GM10248 (cell line): ENCODE measurements at regions of chr9 and their contacts with region 1.

Region 1: DNA sequence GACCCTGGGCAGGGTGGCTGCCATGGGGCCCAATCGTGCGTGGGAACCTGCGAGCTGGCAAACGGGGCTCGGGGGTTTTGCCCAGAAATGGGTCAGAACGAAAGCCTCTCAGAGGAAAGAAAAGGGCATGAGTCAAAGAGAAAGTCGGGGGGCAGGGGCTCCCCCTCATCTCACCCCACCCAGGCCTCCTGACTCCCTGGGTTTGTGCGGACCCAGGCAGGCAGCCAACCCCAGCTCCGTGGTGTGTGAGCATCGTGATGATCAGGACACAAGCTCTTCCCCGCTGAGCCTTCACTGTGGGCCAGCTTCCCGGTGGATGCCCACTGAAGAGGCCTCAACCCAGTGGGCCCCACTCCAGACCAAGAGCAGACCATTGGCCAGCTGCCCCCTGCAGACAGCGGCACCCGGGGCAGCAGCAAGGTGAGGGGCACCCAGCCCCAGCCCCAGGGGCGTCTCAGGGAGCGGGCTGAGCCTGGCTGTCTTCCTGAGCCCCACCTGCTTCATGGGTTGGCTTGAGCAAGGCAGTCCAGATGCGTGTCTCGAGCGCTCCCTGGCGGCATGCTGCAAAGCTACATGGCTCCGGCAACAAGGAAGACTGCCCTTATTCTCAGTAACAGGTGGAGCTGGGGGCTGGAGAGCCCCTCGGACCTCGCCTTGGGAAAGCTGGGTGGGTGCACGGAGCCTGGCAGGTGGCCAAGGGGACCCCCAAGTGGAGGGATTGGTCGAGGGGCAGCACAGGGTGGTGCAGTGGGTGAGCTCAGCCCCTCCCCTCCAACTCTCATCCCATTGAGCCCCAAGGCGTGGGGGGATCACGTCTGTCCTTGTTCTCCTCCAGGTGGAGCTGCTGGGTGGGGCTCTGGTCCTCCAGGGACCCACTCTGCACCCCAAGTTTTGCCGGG is 3.2 kb upstream of the FUT7 start:
- DNase-seq: peak; percentile 92
- CTCF ChIP-seq: peak; percentile 96

Region 2: GRCh38 chr9:136769710-136770191 is 265.4 kb before region 1 on chr9:
- CTCF ChIA-PET with region 1: interaction called, 13 read pairs
- POLR2A ChIA-PET with region 1: no interaction called
- DNase-seq: peak; percentile 76
- CTCF ChIP-seq: peak; percentile 74

Region 3: DNA sequence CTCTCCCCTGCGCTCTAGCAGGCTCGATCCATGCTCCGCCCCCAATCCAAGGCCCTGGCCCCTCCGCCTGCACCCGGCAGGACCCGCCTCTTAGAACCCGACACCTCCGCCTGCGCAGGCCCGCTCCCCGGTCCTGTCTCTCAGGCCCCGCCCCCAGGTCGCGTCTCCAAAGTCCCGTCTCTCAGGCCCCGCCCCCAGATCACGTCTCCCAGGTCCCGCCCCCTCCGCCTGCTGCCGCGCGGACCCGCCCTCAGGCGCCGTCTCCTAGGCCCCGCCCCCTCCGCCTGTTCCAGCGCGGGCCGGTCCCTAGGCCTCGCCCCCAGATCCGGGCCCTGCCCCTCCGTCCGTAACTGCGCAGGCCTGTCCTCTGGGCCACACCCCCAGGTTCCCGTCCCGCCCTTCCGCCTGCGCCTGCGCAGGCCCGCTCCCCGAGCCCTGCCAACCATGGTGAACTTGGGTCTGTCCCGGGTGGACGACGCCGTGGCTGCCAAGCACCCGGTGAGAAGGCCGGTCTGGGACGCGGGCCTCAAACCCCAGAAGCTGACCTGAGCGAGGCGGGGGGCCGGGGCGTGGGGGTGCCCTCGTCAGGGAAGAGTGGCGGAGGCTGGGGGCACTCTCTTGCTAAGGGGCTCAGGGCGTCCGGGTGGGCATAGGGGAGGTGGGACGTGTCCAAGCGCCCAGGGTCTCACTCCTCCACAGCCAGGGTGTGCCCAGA is 244.0 kb before region 1 on chr9 and contains the start of gene TMEM141:
- CTCF ChIA-PET with region 1: interaction called, 41 read pairs
- POLR2A ChIA-PET with region 1: no interaction called
- DNase-seq: peak; percentile 99
- CTCF ChIP-seq: peak; percentile 1

Region 4: DNA sequence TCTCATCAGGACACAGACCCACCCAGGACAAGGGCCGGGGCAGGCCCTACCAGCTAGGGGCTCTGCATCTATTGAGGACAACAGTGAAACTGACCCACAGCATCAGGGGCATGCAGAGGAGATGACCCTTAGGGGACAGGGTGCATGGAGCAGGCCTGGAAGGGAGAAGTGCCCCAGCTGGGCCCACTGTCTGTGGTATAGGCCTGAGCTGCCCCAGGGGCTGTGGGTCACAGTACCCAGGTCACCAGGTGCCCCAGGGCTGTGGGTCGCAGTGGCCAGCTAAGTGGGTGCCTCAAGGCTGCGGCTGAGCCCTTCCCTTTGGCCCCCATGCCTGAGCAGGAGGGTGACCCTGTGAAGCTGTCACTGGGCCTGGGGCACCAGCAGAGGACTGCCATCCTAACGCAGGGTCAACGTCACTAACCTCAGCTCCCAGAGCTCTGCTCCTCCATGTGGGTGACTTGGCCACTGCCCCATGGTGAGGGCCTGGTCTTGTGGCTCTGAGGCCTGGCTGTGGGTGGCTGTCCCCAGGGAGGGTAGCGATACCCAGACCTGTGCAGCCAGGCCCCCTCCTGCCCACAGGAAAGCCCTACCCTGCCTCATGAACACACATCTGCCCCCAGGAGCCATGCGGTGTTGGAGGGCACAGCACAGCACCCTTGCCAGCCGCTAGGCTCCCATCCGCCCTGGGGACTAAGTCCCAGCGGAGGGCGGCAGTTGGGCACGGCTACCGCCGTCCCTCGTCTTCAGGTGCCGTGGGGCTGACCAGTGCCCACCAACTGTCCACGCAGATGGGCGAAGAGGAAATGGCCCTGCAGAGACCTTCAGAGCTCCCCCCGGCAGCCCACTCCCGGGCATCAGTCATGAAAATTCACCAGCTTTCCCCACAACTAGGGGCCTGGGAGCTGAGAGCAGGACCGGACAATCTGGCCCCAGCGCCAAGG is 173.9 kb before region 1 on chr9:
- CTCF ChIA-PET with region 1: no interaction called
- POLR2A ChIA-PET with region 1: no interaction called
- DNase-seq: no peak
- CTCF ChIP-seq: no peak

Region 5: GRCh38 chr9:136975644-136976043 is 59.5 kb before region 1 on chr9:
- CTCF ChIA-PET with region 1: interaction called, 20 read pairs
- POLR2A ChIA-PET with region 1: no interaction called
- DNase-seq: no peak
- CTCF ChIP-seq: peak; percentile 37

Region 6: GRCh38 chr9:137000177-137000883 is 34.8 kb before region 1 on chr9:
- CTCF ChIA-PET with region 1: interaction called, 41 read pairs
- POLR2A ChIA-PET with region 1: no interaction called
- DNase-seq: peak; percentile 84
- CTCF ChIP-seq: no peak

Region 7: DNA sequence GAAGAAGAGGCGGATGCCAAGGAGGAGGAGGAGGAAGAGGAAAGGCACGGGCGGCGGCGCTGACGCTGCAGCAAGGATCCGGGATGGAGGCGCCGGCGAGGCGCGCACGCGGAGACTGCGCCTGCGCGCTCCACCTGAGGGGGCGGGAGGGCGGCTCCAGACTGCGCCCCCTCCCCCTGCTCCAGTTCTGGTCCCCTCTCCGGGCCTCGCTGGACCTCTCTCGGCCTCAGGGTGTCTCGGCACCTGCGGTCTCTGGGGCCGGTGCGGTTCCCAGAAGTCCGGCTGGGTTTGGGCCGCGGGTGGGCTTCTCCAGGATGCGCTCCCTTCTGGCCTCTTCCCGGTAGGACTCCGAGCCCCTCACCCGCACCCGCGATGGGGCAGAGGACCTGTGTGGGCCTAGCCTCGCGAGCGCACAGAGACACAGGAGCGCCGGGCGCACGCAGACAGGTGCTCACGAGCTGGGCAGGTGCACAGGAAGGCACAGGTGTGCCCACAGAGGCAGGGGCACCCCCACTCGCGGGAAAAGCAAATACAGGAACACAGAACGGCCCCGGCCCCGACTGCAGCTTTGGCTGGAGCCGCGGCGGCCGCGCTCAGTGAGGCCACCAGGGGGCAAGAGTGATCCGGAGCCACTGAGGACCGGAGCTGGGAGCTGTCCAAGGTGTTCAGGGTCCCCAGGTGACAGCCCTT is 11.1 kb after region 1 on chr9 and contains the start of gene NPDC1:
- CTCF ChIA-PET with region 1: interaction called, 68 read pairs
- POLR2A ChIA-PET with region 1: no interaction called
- DNase-seq: peak; percentile 93
- CTCF ChIP-seq: peak; percentile 94

Region 8: GRCh38 chr9:137070201-137070905 is 35.2 kb after region 1 on chr9 and contains the start of gene SAPCD2:
- CTCF ChIA-PET with region 1: interaction called, 202 read pairs
- POLR2A ChIA-PET with region 1: interaction called, 5 read pairs
- DNase-seq: peak; percentile 94
- CTCF ChIP-seq: no peak

Region 9: DNA sequence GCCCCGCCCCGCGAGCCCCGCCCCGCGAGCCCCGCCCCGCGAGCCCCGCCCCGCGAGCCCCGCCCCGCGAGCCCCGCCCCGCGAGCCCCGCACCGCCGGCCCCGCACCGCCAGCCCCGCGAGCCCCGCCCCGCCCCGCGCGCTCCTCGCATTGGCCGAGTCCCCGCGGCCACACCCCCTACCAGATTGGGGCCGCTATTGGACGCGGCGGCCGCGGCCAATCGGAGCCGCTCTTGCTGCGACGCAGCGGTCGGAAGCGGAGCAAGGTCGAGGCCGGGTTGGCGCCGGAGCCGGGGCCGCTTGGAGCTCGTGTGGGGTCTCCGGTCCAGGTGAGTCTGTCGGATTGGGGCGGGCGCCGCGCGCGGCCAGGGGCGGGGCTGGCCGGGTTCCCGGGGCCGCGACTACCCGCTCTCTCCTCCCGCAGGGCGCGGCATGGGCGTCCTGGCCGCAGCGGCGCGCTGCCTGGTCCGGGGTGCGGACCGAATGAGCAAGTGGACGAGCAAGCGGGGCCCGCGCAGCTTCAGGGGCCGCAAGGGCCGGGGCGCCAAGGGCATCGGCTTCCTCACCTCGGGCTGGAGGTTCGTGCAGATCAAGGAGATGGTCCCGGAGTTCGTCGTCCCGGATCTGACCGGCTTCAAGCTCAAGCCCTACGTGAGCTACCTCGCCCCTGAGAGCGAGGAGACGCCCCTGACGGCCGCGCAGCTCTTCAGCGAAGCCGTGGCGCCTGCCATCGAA is 516.7 kb after region 1 on chr9 and contains the start of gene MRPL41:
- CTCF ChIA-PET with region 1: no interaction called
- POLR2A ChIA-PET with region 1: no interaction called
- DNase-seq: peak; percentile 97
- CTCF ChIP-seq: no peak